ENCODE measurements at regions of chr1 and their contacts with region 1.

Region 1: GRCh38 chr1:157073944-157074767 is 25.5 kb downstream of the ETV3L start:
- DNase-seq: peak; percentile 66
- CTCF ChIP-seq: peak; percentile 54

Region 2: DNA sequence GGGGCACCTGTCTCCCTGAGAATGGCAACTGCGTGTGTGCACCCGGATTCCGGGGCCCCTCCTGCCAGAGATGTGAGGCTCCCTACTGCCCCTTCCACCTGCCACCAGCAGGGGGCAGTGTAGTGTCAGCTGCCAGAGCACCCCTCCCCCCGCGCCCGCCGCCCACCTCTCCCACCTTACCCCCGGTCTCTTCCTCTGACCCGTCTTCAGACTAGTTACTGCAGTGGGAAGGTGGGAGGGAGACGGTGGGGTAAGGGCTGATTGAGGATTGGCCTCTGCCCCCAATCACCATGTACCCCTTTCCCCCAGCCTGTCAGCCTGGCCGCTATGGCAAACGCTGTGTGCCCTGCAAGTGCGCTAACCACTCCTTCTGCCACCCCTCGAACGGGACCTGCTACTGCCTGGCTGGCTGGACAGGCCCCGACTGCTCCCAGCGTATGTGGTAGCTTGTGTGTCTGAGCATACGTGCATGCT is 163.8 kb before region 1 on chr1:
- CTCF ChIA-PET with region 1: interaction called, 21 read pairs
- POLR2A ChIA-PET with region 1: no interaction called
- DNase-seq: peak; percentile 83
- CTCF ChIP-seq: peak; percentile 82

Measured in GM10248 (cell line).